Activated T-helper 2 cell treated with anti-CD3 and anti-CD28 coated beads, Interferon-gamma antibody, Interleukin-2, Interleukin-4, amounts not matched to agents 10 μg/mL and 5 μg/mL and 100 μg/mL, durations not matched to agents 14 hours and 24 hours and 36 hours (primary cell): ENCODE measurements at regions of chr9 and their contacts with region 1.

Region 1: DNA sequence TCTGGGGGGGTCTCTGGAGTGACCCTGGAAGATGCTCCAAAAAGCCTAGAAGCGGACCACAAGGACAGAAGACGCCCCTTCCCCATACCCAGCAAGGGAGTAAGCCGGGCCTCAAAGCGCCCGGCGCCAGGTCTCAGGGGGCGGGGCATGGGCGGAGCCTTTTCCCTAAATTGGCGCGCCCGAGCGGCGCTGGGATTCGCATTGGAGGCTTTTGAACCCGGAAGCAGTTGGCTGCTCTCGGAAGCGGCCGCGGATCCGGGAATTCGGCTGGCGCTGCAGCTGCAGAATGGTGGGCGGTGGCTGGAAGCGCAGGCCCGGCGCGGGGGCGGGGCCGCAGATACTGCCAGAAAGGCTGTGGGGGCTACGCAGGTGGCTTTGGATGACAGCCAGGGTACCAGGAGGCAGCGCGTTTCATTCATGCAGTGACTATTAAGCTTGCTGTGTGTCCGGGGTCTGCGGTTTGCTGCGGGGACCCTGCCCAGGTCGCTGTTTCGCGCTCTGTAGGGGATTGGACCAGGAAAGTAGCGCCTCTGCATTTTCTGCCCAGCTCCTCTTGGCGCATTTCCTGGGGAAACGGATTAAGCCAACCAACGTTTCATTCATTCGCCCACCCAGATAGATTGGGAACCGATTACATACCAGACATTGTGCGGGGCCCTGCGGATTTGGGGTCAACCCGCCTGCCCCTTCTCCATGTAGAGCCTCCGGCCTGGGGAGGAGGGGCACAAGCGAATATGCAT is 83.0 kb upstream of the FREM1 start:
- DNase-seq: no peak
- H3K4me3 Mint-ChIP-seq: peak overlapping the region; percentile 64
- H3K27ac Mint-ChIP-seq: no peak overlapping the region
- H3K4me1 Mint-ChIP-seq: peaks cover 25% of the 10 kb centered on the region
- H3K27me3 Mint-ChIP-seq: peaks cover 10% of the 10 kb centered on the region

Region 2: DNA sequence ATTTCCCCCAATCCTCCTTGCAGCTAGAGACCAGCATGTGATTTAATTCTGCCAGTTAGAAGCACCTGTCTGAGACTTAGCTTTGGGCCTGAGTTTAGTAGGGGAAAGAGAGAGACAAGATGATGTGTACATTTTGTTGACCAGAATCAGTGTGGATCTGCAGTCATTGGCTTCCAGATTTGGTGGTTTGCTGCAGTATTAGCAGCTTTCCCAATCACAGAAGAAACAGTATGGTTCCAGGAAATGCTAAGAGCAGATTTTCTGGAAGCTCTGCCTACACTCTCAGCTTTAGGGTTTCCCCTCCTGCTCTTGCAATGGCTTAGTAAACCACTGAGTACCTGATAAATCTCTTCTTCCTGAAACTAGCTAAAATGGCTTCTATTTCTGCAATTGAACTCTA is 34.2 kb before region 1 on chr9:
- intact Hi-C with region 1: loop called (anchors 1 kb)
- DNase-seq: no peak
- H3K4me3 Mint-ChIP-seq: no peak overlapping the region
- H3K27ac Mint-ChIP-seq: no peak overlapping the region
- H3K4me1 Mint-ChIP-seq: peaks cover 21% of the 10 kb centered on the region
- H3K27me3 Mint-ChIP-seq: no peaks in the 10 kb centered on the region